Cardiac septum (tissue), 1 donor: ENCODE measurements at regions of chr13 and their contacts with region 1.

Region 1: GRCh38 chr13:59633290-59633689 is 530.4 kb downstream of the DIAPH3 start:
- DNase-seq: no peak

Region 2: DNA sequence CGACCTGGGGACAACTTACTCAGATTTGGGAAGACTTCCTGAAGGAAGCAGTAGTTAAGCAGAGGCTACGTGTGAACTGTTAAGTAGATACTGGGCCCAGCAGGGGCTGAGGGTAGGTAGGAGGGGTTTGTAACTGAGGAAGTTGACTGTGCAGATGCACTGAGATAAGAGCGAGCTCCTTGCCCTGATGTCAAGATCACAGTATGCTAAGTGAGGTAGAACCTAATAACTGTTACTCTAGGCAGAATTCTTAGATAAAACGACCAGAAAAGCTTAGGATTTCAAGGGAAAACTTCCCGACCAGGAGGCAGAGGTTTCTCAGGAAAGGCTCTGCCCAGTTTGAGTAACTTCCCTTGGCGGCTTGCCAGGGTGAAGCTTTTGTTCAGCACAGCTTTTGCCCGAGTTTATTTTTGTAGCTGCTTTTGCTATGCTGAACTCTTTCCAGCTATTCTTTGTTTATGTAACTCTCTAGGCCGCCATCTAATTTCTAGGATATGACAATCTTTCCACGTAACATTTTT is 101.7 kb before region 1 on chr13:
- intact Hi-C with region 1: loop called (anchors 10 kb)
- DNase-seq: peak; percentile 89